Heart left ventricle (tissue), 16 donors: ENCODE measurements at regions of chr15 and their contacts with region 1.

Region 1: GRCh38 chr15:100147828-100148227 is 193.9 kb downstream of the ADAMTS17 start:
- DNase-seq: no peak
- ATAC-seq: no peak
- H3K4me3 ChIP-seq: no peak overlapping the region
- H3K27ac ChIP-seq: no peak overlapping the region
- H3K4me1 ChIP-seq: peaks cover 0 to 3% (median 0%) of the 10 kb centered on the region in 12 donors
- H3K27me3 ChIP-seq: no peaks in the 10 kb centered on the region
- CTCF ChIP-seq: no peak
- POLR2A ChIP-seq: no peak

Region 2: DNA sequence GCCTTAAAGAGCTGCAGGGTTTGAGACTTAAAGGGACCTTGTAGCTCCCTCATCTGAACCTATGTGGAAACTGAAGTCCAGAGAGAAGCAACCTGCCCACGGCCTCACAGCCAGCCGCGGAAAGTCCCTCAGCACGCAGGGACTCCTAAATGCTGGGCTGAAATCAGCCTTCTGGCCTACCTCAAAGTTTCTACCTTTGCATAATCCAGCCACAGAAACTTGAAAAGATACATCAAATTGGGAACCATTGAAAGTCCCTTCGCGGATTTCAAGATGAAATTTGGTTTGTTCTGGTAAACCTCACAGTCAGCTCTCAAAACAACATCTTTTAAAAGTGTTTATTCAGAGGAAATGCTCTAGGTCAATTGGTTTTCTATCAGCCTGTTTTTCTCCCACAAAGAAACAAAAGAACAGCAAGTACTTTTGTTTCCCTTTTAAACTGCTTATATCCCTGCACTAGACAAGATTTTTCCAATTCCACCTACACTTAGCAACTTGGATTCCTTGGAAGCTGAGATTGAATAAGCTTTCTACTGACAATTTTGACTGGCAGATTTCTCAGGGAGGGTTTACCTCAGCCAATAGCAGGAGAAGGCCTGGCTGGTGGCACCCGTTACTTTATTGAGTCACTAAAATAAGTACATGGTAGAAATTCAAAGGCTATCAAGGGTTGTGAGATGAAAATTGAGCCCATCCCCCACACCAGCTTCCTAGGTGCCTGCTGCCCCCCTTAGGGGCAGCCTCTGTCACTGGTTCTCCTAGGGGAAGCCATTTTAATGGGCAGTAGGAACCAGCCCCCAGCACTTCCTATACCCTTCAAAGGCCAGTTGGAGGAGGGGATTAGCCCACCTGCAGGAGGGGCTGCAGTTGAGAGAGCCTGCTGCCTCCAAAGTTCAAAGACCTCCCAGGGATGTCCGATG is 22.7 kb after region 1 on chr15:
- intact Hi-C with region 1: loop called in 1 of 10 experiments (anchors 2 kb)
- DNase-seq: no peak
- ATAC-seq: no peak
- H3K4me3 ChIP-seq: no peak overlapping the region
- H3K27ac ChIP-seq: no peak overlapping the region
- H3K4me1 ChIP-seq: peaks cover 0 to 10% (median 0%) of the 10 kb centered on the region in 12 donors
- H3K27me3 ChIP-seq: no peaks in the 10 kb centered on the region
- CTCF ChIP-seq: no peak
- POLR2A ChIP-seq: no peak